Endothelial cell of umbilical vein (primary cell): ENCODE measurements at regions of chr10 and their contacts with region 1.

Region 1: DNA sequence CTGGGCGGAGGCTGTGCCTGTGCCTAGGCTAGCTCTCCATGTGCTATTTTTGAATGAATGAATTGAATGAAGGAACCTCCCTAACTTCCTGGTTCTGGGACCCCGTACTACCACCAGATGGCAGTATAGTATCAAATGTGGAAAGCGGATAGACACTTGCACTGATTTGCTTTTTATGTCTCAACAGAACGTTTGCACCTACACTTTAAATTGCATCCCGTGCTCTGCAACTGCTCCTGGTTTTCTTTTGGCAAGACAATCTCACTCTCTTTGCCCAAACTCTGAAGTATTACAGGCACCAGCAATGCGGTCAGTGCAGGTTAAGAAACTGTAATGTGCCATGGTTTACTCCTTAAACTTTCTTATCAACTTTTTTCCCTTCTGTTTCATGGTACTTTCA is 6.5 kb downstream of the FZD8 start:
- DNase-seq: peak; percentile 79
- H3K4me3 ChIP-seq: no peak overlapping the region
- H3K27ac ChIP-seq: no peak overlapping the region
- H3K4me1 ChIP-seq: peaks cover 18% of the 10 kb centered on the region
- H3K27me3 ChIP-seq: peaks cover 2 to 3% of the 10 kb centered on the region in 2 experiments
- CTCF ChIP-seq: peak; percentile 77 to 85
- POLR2A ChIP-seq: no peak

Region 2: DNA sequence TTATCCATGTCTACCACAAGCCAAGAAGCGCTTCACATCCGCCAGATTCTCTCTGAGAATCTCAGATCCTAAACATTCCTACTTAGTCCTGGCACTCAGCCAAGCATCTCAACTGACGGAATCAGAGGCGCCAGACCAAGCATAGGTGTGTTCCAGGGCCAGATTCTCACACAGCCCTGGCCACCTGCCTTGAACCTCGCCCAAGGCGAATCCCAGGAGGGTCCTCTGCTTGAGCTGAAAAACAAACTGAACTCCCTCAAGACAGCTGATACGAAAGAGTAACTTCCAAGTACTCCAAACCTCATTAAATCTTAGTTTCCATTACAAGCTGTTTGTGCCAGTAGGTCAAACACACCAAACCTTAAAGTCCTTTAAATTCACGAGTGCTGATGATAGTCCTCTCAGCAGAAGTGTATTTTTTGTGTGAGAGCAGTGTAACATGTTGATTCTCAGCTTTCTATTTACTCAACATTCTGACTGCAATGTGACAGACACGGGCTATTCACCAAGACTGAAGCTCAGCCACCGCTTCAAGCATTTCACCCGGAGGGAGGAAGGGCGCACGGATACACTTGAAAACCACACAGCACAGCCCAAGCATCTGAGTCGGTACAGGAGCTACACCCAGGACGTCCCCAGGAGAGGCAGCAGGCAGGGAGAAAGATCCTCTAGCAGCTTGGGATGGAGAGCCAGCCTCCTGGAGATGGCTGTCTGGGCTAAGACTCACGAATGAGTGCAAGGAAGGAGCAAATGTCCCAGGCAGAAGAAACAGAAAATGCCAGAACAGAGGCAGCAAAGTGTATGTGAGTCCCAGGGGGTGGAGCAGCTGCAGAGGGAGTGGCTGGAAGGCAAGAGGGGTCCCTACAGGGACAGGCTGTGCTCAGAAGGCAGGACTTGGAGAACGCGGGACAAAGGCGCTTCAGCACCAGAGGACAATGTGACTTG is 826.5 kb before region 1 on chr10:
- CTCF ChIA-PET with region 1: no interaction called
- POLR2A ChIA-PET with region 1: no interaction called
- dilution Hi-C with region 1: no loop called
- intact Hi-C with region 1: no loop called
- DNase-seq: no peak
- H3K4me3 ChIP-seq: no peak overlapping the region
- H3K27ac ChIP-seq: no peak overlapping the region
- H3K4me1 ChIP-seq: peaks cover 10% of the 10 kb centered on the region
- H3K27me3 ChIP-seq: no peaks in the 10 kb centered on the region
- CTCF ChIP-seq: no peak
- POLR2A ChIP-seq: no peak

Region 3: DNA sequence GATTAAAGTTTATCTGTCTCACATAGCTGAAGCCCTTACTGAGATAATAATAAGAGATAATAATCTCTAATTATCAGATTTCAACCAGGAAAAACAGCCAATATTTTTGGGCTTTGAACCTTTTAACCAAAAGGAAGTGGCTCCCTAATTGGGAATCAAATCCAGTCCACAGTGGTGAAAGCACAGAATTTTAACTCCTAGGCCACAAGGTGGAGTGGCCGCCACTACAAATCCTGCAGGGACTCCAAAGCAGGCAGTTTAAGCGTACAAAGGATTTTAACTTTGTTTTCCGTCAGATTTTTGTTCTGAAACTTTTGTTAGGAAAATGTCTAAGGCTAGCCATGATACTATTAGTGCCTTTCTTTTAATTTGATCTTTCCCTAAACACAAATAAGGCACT is 398.8 kb before region 1 on chr10:
- CTCF ChIA-PET with region 1: interaction called, 6 read pairs
- POLR2A ChIA-PET with region 1: no interaction called
- dilution Hi-C with region 1: no loop called
- intact Hi-C with region 1: loop called (anchors 2 kb)
- DNase-seq: peak; percentile 26
- H3K4me3 ChIP-seq: no peak overlapping the region
- H3K27ac ChIP-seq: no peak overlapping the region
- H3K4me1 ChIP-seq: no peaks in the 10 kb centered on the region
- H3K27me3 ChIP-seq: no peaks in the 10 kb centered on the region
- CTCF ChIP-seq: peak; percentile 12 to 35
- POLR2A ChIP-seq: no peak

Region 4: GRCh38 chr10:35613597-35614226 is 21.9 kb before region 1 on chr10:
- CTCF ChIA-PET with region 1: interaction called, 68 read pairs
- POLR2A ChIA-PET with region 1: no interaction called
- dilution Hi-C with region 1: no loop called
- intact Hi-C with region 1: no loop called
- DNase-seq: peak; percentile 44
- H3K4me3 ChIP-seq: no peak overlapping the region
- H3K27ac ChIP-seq: no peak overlapping the region
- H3K4me1 ChIP-seq: no peaks in the 10 kb centered on the region
- H3K27me3 ChIP-seq: peaks cover 19 to 22% of the 10 kb centered on the region in 2 experiments
- CTCF ChIP-seq: peak; percentile 30 to 46
- POLR2A ChIP-seq: no peak

Region 5: DNA sequence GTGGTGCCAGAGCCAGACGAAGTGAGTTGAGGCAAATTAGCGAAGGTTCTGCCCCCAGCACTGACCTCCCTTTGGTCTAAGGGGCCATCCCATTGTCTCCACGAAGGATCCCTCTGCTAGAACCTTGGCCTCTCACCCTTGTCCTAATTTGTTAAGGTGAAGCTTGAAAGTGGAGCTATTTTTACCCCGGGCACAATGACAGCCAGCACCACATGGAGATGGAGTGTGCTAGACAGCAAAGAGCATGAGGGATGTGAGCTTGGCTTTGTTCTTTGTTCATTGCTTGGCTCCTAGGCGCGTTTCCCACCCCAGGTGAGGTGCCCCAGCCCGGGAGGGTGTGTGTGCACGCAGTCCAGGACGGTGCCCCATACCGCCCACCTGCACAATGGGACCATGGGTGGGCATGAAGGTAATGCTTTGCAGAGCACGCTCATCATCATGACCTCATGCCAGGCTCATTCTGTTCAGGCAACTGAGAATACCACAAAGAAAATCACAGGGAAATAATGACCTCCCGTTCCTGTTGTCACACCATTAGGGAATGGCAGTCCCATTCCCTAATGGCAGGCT is 367.5 kb after region 1 on chr10:
- CTCF ChIA-PET with region 1: no interaction called
- POLR2A ChIA-PET with region 1: no interaction called
- dilution Hi-C with region 1: no loop called
- intact Hi-C with region 1: loop called (anchors 5 kb)
- DNase-seq: no peak
- H3K4me3 ChIP-seq: no peak overlapping the region
- H3K27ac ChIP-seq: no peak overlapping the region
- H3K4me1 ChIP-seq: no peaks in the 10 kb centered on the region
- H3K27me3 ChIP-seq: no peaks in the 10 kb centered on the region
- CTCF ChIP-seq: no peak
- POLR2A ChIP-seq: no peak

Region 6: GRCh38 chr10:36771725-36772124 is 1136.1 kb after region 1 on chr10:
- CTCF ChIA-PET with region 1: interaction called, 22 read pairs
- POLR2A ChIA-PET with region 1: no interaction called
- dilution Hi-C with region 1: no loop called
- intact Hi-C with region 1: no loop called
- DNase-seq: peak; percentile 11
- H3K4me3 ChIP-seq: no peak overlapping the region
- H3K27ac ChIP-seq: no peak overlapping the region
- H3K4me1 ChIP-seq: no peaks in the 10 kb centered on the region
- H3K27me3 ChIP-seq: no peaks in the 10 kb centered on the region
- CTCF ChIP-seq: no peak
- POLR2A ChIP-seq: no peak

Region 7: DNA sequence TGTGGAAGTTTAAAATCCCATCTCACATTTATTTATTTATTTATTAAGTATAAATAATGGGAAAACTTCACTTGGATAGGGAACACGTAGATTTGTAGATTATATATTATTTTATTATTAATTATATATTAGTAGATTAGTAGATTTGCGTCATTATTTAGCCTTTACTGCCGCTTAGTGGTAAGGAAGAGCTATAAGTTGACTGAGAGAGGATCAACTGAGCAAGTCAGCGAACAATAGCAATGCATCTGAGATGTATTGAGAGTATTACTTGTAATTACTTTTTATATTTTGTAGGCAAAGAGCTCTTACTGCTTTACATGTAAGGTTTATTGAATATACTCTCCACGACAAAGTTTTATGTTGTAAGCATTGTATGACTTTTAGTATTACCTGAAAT is 1245.3 kb after region 1 on chr10:
- CTCF ChIA-PET with region 1: interaction called, 59 read pairs
- POLR2A ChIA-PET with region 1: no interaction called
- dilution Hi-C with region 1: no loop called
- intact Hi-C with region 1: loop called (anchors 1 kb)
- DNase-seq: peak; percentile 20
- H3K4me3 ChIP-seq: no peak overlapping the region
- H3K27ac ChIP-seq: no peak overlapping the region
- H3K4me1 ChIP-seq: no peaks in the 10 kb centered on the region
- H3K27me3 ChIP-seq: peaks cover 0 to 4% of the 10 kb centered on the region in 2 experiments
- CTCF ChIP-seq: peak; percentile 14 to 48
- POLR2A ChIP-seq: no peak